Posterior cingulate gyrus (tissue), 11 donors: ENCODE measurements at regions of chrX and their contacts with region 1.

Region 1: DNA sequence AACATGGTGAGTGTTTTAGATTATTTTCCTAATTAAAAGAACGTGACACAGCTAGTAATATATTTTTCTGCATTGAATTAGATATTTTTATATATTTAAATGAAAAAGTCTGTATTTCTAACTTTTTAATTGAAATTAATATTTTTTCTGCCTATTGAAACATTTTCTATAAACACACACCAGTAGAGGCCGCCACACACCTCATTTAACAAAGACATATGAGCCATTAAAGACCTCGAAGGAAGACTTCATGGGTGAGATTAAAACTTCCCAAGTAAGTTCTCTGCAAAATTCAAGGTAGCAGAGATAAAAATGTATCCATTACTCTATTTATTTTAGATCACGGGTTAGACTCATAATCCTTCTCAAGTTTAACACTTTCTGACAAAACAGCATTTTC is 8.3 kb downstream of the SLITRK2 start:
- DNase-seq: no peak

Region 2: DNA sequence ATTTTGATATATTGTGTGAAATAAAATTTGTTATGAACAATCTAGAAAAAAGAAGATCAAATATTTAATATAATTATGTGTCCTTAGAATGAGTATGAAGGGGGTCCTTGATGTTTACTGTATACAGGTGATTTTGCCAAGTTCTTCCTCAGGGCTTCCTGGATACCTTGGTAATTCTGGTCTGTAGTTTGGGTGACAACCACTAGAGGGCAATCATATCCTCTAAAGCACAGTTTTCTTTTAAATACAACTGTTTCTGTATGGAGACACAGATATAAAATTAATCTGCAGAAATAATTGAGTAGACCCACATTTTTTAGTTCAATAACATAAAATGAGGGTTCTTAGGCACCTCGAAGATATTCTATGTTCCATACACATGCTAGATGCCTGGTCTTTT is 420.9 kb before region 1 on chrX:
- intact Hi-C with region 1: loop called (anchors 10 kb)
- DNase-seq: no peak

Region 3: GRCh38 chrX:145654486-145654885 is 171.4 kb before region 1 on chrX:
- intact Hi-C with region 1: loop called (anchors 5 kb)
- DNase-seq: no peak

Region 4: DNA sequence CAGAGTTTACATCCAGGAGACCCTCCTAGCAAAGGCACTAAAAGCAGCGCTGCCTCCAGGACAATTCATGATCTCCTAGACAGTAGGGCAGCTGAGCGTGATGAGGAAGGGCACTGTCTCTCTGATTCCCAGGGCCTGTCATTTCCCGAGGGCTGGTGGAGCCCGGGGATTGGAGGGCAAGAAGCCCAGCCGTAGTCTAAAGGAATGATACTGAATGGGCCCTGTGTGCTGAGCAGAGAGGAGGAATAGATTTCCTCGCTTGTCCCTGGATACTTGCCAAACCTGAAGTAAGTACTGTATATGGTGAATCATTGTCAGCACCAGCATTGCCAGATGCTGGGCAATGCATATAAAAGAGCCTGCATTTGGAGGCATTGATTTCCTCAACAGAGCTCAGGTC is 96.3 kb before region 1 on chrX:
- intact Hi-C with region 1: loop called (anchors 5 kb)
- DNase-seq: peak in 9 of 10 donors; percentile 16 to 92 (median 55)

Region 5: GRCh38 chrX:145910017-145910416 is 84.1 kb after region 1 on chrX:
- intact Hi-C with region 1: loop called (anchors 2 kb)
- DNase-seq: peak in 1 of 10 donors; percentile 9

Region 6: GRCh38 chrX:145953628-145954027 is 127.7 kb after region 1 on chrX:
- intact Hi-C with region 1: no loop called
- DNase-seq: no peak